Activated naive CD4-positive, alpha-beta T cell treated with anti-CD3 and anti-CD28 coated beads, Interleukin-2, amount 10 ng/mL, durations not matched to agents 7 days and 5 days (primary cell): ENCODE measurements at regions of chr10 and their contacts with region 1.

Region 1: GRCh38 chr10:6667679-6668270 is 87.7 kb upstream of the PRKCQ start:
- DNase-seq: peak; percentile 71
- H3K4me3 Mint-ChIP-seq: no peak overlapping the region
- H3K27ac Mint-ChIP-seq: no peak overlapping the region
- H3K4me1 Mint-ChIP-seq: peaks cover 30% of the 10 kb centered on the region
- H3K27me3 Mint-ChIP-seq: peaks cover 17% of the 10 kb centered on the region

Region 2: DNA sequence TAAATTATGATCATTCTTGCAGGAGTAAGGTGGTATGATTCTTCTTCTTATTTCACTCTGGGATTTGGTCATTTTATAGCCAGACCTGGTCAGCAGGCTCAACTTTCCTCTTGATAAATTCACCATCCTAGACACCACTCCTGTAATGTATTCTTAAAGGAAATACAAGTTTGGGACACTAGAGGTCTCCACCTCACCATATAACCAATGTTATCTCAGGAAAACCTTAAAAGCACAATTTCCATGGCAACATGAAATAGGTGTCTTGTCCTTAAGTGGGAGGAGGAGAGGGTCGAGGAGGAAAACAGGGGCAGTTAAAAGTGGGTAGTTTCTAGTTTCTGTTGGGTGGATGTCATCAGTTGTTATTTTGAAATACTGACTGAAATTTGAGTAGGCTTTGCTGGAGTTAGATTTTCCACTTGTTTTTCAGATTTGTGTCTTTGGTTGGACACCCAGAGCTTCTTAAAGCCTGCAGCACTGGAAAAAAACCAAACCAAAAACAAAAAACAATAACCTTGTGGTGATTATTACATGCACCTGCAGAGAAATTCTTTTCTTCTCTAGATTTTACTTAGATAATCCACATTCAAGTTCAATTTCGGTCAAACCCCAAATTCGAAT is 250.8 kb before region 1 on chr10:
- CTCF ChIA-PET with region 1: interaction called, 48 read pairs
- DNase-seq: no peak
- H3K4me3 Mint-ChIP-seq: no peak overlapping the region
- H3K27ac Mint-ChIP-seq: no peak overlapping the region
- H3K4me1 Mint-ChIP-seq: peaks cover 7% of the 10 kb centered on the region
- H3K27me3 Mint-ChIP-seq: no peaks in the 10 kb centered on the region

Region 3: GRCh38 chr10:6490614-6491013 is 177.2 kb before region 1 on chr10:
- CTCF ChIA-PET with region 1: no interaction called
- DNase-seq: no peak
- H3K4me3 Mint-ChIP-seq: no peak overlapping the region
- H3K27ac Mint-ChIP-seq: no peak overlapping the region
- H3K4me1 Mint-ChIP-seq: peaks cover 42% of the 10 kb centered on the region
- H3K27me3 Mint-ChIP-seq: no peaks in the 10 kb centered on the region

Region 4: GRCh38 chr10:6563075-6563474 is 104.7 kb before region 1 on chr10:
- CTCF ChIA-PET with region 1: interaction called, 15 read pairs
- DNase-seq: peak; percentile 68
- H3K4me3 Mint-ChIP-seq: peak overlapping the region; percentile 68
- H3K27ac Mint-ChIP-seq: peak overlapping the region; percentile 92
- H3K4me1 Mint-ChIP-seq: peaks cover 94% of the 10 kb centered on the region
- H3K27me3 Mint-ChIP-seq: no peaks in the 10 kb centered on the region

Region 5: GRCh38 chr10:6642876-6643275 is 24.9 kb before region 1 on chr10:
- CTCF ChIA-PET with region 1: interaction called, 10 read pairs
- DNase-seq: peak; percentile 41
- H3K4me3 Mint-ChIP-seq: peak overlapping the region; percentile 1
- H3K27ac Mint-ChIP-seq: peak overlapping the region; percentile 42
- H3K4me1 Mint-ChIP-seq: peaks cover 52% of the 10 kb centered on the region
- H3K27me3 Mint-ChIP-seq: peaks cover 3% of the 10 kb centered on the region

Region 6: GRCh38 chr10:6678211-6678803 is 10.5 kb after region 1 on chr10:
- CTCF ChIA-PET with region 1: interaction called, 11 read pairs
- DNase-seq: peak; percentile 74
- H3K4me3 Mint-ChIP-seq: no peak overlapping the region
- H3K27ac Mint-ChIP-seq: no peak overlapping the region
- H3K4me1 Mint-ChIP-seq: peaks cover 6% of the 10 kb centered on the region
- H3K27me3 Mint-ChIP-seq: peaks cover 36% of the 10 kb centered on the region

Region 7: GRCh38 chr10:6694447-6695140 is 26.8 kb after region 1 on chr10:
- CTCF ChIA-PET with region 1: no interaction called
- DNase-seq: no peak
- H3K4me3 Mint-ChIP-seq: no peak overlapping the region
- H3K27ac Mint-ChIP-seq: no peak overlapping the region
- H3K4me1 Mint-ChIP-seq: no peaks in the 10 kb centered on the region
- H3K27me3 Mint-ChIP-seq: peaks cover 13% of the 10 kb centered on the region